ENCODE measurements at regions of chr4 and their contacts with region 1.

Region 1: GRCh38 chr4:119212234-119212963 is at the start of gene USP53:
- DNase-seq: peak; percentile 96 to 99 (median 98)
- ATAC-seq: peak; percentile 92
- H3K4me3 ChIP-seq: peak within 1 kb of the TSS; percentile 81
- H3K4me3 Mint-ChIP-seq: peak within 1 kb of the TSS; percentile 94
- H3K27ac ChIP-seq: peak within 1 kb of the TSS; percentile 78 to 80
- H3K27ac Mint-ChIP-seq: peak within 1 kb of the TSS; percentile 96
- H3K4me1 ChIP-seq: peaks cover 9% of the 10 kb centered on the region
- H3K4me1 Mint-ChIP-seq: peaks cover 39% of the 10 kb centered on the region
- H3K27me3 ChIP-seq: no peaks in the 10 kb centered on the region
- H3K27me3 Mint-ChIP-seq: no peaks in the 10 kb centered on the region
- CTCF ChIP-seq: no peak
- total RNA-seq, gene USP53: 15.1 to 15.5 TPM

Region 2: GRCh38 chr4:119041951-119042560 is 170.3 kb before region 1 on chr4:
- CTCF ChIA-PET with region 1: interaction called, 3 read pairs
- POLR2A ChIA-PET with region 1: interaction called, 9 read pairs
- intact Hi-C with region 1: loop called in 1 of 2 experiments (anchors 5 kb)
- DNase-seq: peak in 13 of 14 experiments; percentile 4 to 83 (median 37)
- ATAC-seq: peak; percentile 89
- H3K4me3 ChIP-seq: no peak overlapping the region
- H3K4me3 Mint-ChIP-seq: no peak overlapping the region
- H3K27ac ChIP-seq: no peak overlapping the region
- H3K27ac Mint-ChIP-seq: no peak overlapping the region
- H3K4me1 ChIP-seq: no peaks in the 10 kb centered on the region
- H3K4me1 Mint-ChIP-seq: no peaks in the 10 kb centered on the region
- H3K27me3 ChIP-seq: no peaks in the 10 kb centered on the region
- H3K27me3 Mint-ChIP-seq: no peaks in the 10 kb centered on the region
- CTCF ChIP-seq: peak; percentile 83

Region 3: GRCh38 chr4:119149110-119149509 is 63.3 kb before region 1 on chr4:
- CTCF ChIA-PET with region 1: no interaction called
- POLR2A ChIA-PET with region 1: no interaction called
- intact Hi-C with region 1: loop called in 1 of 2 experiments (anchors 5 kb)
- DNase-seq: no peak
- ATAC-seq: no peak
- H3K4me3 ChIP-seq: no peak overlapping the region
- H3K4me3 Mint-ChIP-seq: no peak overlapping the region
- H3K27ac ChIP-seq: no peak overlapping the region
- H3K27ac Mint-ChIP-seq: no peak overlapping the region
- H3K4me1 ChIP-seq: no peaks in the 10 kb centered on the region
- H3K4me1 Mint-ChIP-seq: no peaks in the 10 kb centered on the region
- H3K27me3 ChIP-seq: no peaks in the 10 kb centered on the region
- H3K27me3 Mint-ChIP-seq: peaks cover 13% of the 10 kb centered on the region
- CTCF ChIP-seq: no peak

Region 4: GRCh38 chr4:119172223-119172622 is 40.2 kb before region 1 on chr4:
- CTCF ChIA-PET with region 1: no interaction called
- POLR2A ChIA-PET with region 1: no interaction called
- intact Hi-C with region 1: no loop called
- DNase-seq: no peak
- ATAC-seq: no peak
- H3K4me3 ChIP-seq: no peak overlapping the region
- H3K4me3 Mint-ChIP-seq: no peak overlapping the region
- H3K27ac ChIP-seq: no peak overlapping the region
- H3K27ac Mint-ChIP-seq: no peak overlapping the region
- H3K4me1 ChIP-seq: no peaks in the 10 kb centered on the region
- H3K4me1 Mint-ChIP-seq: no peaks in the 10 kb centered on the region
- H3K27me3 ChIP-seq: no peaks in the 10 kb centered on the region
- H3K27me3 Mint-ChIP-seq: peaks cover 3% of the 10 kb centered on the region
- CTCF ChIP-seq: no peak

Region 5: GRCh38 chr4:119244832-119245231 is 32.4 kb after region 1 on chr4:
- CTCF ChIA-PET with region 1: interaction called, 5 read pairs
- POLR2A ChIA-PET with region 1: interaction called, 5 read pairs
- intact Hi-C with region 1: loop called in 1 of 2 experiments (anchors 5 kb)
- DNase-seq: no peak
- ATAC-seq: no peak
- H3K4me3 ChIP-seq: no peak overlapping the region
- H3K4me3 Mint-ChIP-seq: no peak overlapping the region
- H3K27ac ChIP-seq: no peak overlapping the region
- H3K27ac Mint-ChIP-seq: no peak overlapping the region
- H3K4me1 ChIP-seq: no peaks in the 10 kb centered on the region
- H3K4me1 Mint-ChIP-seq: no peaks in the 10 kb centered on the region
- H3K27me3 ChIP-seq: no peaks in the 10 kb centered on the region
- H3K27me3 Mint-ChIP-seq: no peaks in the 10 kb centered on the region
- CTCF ChIP-seq: no peak

Region 6: DNA sequence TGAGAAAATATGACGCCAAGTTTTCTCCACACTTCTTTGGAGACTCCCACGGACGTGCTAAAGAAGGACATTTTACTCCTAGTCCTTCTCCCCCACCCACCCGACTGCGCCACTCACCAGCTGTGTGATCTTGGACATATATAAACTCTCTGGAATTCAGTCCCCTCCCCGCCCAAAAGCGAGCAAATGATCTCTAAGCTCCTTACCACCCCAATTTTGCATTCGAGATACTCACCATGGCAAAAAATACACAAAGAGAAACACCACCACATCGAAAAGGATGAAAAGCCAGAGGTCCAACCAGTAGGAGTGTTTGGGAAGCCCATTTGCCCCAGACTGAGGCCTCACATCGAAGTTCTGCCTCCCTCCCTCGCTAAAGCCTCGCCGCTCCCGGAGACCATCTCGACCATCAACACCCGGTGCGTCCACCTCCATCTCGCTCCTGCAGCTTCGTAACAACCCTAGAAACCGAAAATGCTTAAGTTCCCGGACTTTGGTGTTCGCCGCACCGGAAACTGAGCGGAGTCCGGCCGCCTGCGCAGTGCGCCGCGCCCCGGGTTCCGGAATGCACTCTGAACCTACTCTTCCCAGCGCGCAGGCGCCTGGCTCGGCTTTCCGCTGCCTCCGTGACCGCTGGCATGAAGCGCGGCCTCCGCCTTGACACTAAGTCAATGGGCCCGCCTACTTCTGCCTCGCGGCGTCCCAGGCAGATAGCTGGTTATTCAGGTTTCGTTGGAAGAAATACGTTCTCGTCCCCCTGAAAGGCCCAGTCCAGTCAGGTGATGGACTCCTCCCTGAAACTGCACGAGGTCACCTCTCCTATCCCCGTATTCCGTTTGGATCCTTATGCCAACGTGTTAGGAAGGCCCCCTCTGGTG is 87.9 kb after region 1 on chr4:
- CTCF ChIA-PET with region 1: interaction called, 6 read pairs
- POLR2A ChIA-PET with region 1: interaction called, 48 read pairs
- intact Hi-C with region 1: loop called (anchors 1 to 5 kb)
- DNase-seq: peak; percentile 80 to 95 (median 88)
- ATAC-seq: peak; percentile 93
- H3K4me3 ChIP-seq: peak overlapping the region; percentile 78
- H3K4me3 Mint-ChIP-seq: peak overlapping the region; percentile 99
- H3K27ac ChIP-seq: peak overlapping the region; percentile 85 to 89
- H3K27ac Mint-ChIP-seq: peak overlapping the region; percentile 99
- H3K4me1 ChIP-seq: peaks cover 20% of the 10 kb centered on the region
- H3K4me1 Mint-ChIP-seq: peaks cover 41% of the 10 kb centered on the region
- H3K27me3 ChIP-seq: no peaks in the 10 kb centered on the region
- H3K27me3 Mint-ChIP-seq: peaks cover 8% of the 10 kb centered on the region
- CTCF ChIP-seq: no peak